Psoas muscle (tissue), 8 donors: ENCODE measurements at regions of chr13 and their contacts with region 1.

Region 1: GRCh38 chr13:43407023-43407581 is 379.7 kb downstream of the ENOX1 start:
- DNase-seq: no peak
- ATAC-seq: peak; percentile 76 to 89 (median 78)
- H3K4me3 ChIP-seq: peak overlapping the region; percentile 37
- H3K27ac ChIP-seq: peak overlapping the region; percentile 85
- H3K4me1 ChIP-seq: peaks cover 8% of the 10 kb centered on the region
- H3K27me3 ChIP-seq: no peaks in the 10 kb centered on the region
- CTCF ChIP-seq: no peak

Region 2: GRCh38 chr13:43348397-43348796 is 58.7 kb before region 1 on chr13:
- intact Hi-C with region 1: no loop called
- DNase-seq: no peak
- ATAC-seq: peak in 3 of 4 donors; percentile 36 to 70 (median 60)
- H3K4me3 ChIP-seq: no peak overlapping the region
- H3K27ac ChIP-seq: no peak overlapping the region
- H3K4me1 ChIP-seq: peaks cover 4% of the 10 kb centered on the region
- H3K27me3 ChIP-seq: no peaks in the 10 kb centered on the region
- CTCF ChIP-seq: no peak

Region 3: GRCh38 chr13:43387880-43388731 is 19.0 kb before region 1 on chr13:
- intact Hi-C with region 1: loop called in 1 of 2 experiments (anchors 2 kb)
- DNase-seq: no peak
- ATAC-seq: peak; percentile 83 to 94 (median 90)
- H3K4me3 ChIP-seq: no peak overlapping the region
- H3K27ac ChIP-seq: peak overlapping the region; percentile 89
- H3K4me1 ChIP-seq: peaks cover 48% of the 10 kb centered on the region
- H3K27me3 ChIP-seq: no peaks in the 10 kb centered on the region
- CTCF ChIP-seq: peak; percentile 3

Region 4: GRCh38 chr13:43448605-43449336 is 41.7 kb after region 1 on chr13:
- intact Hi-C with region 1: no loop called
- DNase-seq: no peak
- ATAC-seq: no peak
- H3K4me3 ChIP-seq: no peak overlapping the region
- H3K27ac ChIP-seq: no peak overlapping the region
- H3K4me1 ChIP-seq: no peaks in the 10 kb centered on the region
- H3K27me3 ChIP-seq: no peaks in the 10 kb centered on the region
- CTCF ChIP-seq: no peak